ENCODE measurements at regions of chr22 and their contacts with region 1.

Region 1: GRCh38 chr22:19909350-19910179 is 32.0 kb upstream of the COMT start:
- DNase-seq: peak; percentile 35 to 90 (median 77)
- ATAC-seq: peak; percentile 86 to 95 (median 87)
- H3K4me3 ChIP-seq: no peak overlapping the region
- H3K4me3 Mint-ChIP-seq: peak overlapping the region in 1 of 3 donors; percentile 2
- H3K27ac ChIP-seq: no peak overlapping the region
- H3K27ac Mint-ChIP-seq: peak overlapping the region; percentile 62 to 80
- H3K4me1 ChIP-seq: peaks cover 2 to 8% of the 10 kb centered on the region in 2 experiments
- H3K4me1 Mint-ChIP-seq: peaks cover 4 to 17% (median 6%) of the 10 kb centered on the region in 3 donors
- H3K27me3 ChIP-seq: no peaks in the 10 kb centered on the region
- H3K27me3 Mint-ChIP-seq: no peaks in the 10 kb centered on the region

Region 2: GRCh38 chr22:19473578-19473977 is 436.0 kb before region 1 on chr22:
- CTCF ChIA-PET with region 1: no interaction called
- POLR2A ChIA-PET with region 1: no interaction called
- DNase-seq: no peak
- ATAC-seq: no peak
- H3K4me3 ChIP-seq: no peak overlapping the region
- H3K4me3 Mint-ChIP-seq: no peak overlapping the region
- H3K27ac ChIP-seq: no peak overlapping the region
- H3K27ac Mint-ChIP-seq: no peak overlapping the region
- H3K4me1 ChIP-seq: peaks cover 7 to 11% of the 10 kb centered on the region in 2 experiments
- H3K4me1 Mint-ChIP-seq: peaks cover 30 to 44% (median 33%) of the 10 kb centered on the region in 3 donors
- H3K27me3 ChIP-seq: no peaks in the 10 kb centered on the region
- H3K27me3 Mint-ChIP-seq: no peaks in the 10 kb centered on the region

Region 3: DNA sequence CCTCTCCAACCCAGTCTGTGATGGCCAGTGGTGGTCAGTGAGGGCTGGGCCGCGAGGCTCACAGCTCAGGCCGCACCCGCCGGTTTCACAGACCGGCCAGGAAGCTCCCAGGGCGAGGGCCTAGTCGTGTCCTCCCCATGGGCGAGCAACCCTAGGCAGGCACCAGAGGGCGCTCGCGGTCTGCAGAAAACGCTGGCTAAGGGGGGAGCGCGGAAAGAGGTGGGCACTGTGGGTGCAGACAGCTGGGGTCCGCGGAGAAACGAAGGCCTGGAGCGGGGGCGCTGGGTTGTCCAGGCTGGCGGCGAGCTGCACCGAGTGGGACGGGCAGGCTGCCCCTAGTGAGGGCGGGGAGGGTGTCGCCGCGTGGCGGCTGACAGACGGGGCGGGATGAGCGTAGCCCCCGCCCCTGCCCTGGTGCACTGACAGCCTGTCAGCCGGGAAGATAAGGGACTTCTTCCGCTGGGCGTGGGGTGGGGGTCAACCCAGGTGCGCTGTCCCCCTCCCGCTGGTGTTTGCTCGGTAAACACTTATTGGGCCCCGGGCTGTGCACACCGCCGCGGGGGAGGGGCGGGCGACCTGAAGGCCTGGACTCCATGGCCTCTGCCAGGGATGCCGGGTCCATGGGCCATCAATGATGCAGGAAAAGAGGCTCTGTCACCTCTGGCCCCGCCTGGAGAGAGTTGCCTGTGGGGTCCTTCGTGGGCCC is 178.8 kb before region 1 on chr22:
- CTCF ChIA-PET with region 1: interaction called, 3 to 20 read pairs
- POLR2A ChIA-PET with region 1: no interaction called
- DNase-seq: peak; percentile 52 to 89 (median 81)
- ATAC-seq: peak; percentile 87 to 92 (median 91)
- H3K4me3 ChIP-seq: peak overlapping the region; percentile 35 to 41
- H3K4me3 Mint-ChIP-seq: peak overlapping the region; percentile 69 to 80 (median 69)
- H3K27ac ChIP-seq: no peak overlapping the region
- H3K27ac Mint-ChIP-seq: no peak overlapping the region
- H3K4me1 ChIP-seq: peaks cover 0 to 13% of the 10 kb centered on the region in 2 experiments
- H3K4me1 Mint-ChIP-seq: peaks cover 2 to 6% (median 3%) of the 10 kb centered on the region in 3 donors
- H3K27me3 ChIP-seq: peaks cover 0 to 35% of the 10 kb centered on the region in 2 experiments
- H3K27me3 Mint-ChIP-seq: peaks cover 0 to 6% of the 10 kb centered on the region in 2 donors

Region 4: GRCh38 chr22:19756288-19757128 is 153.1 kb before region 1 on chr22:
- CTCF ChIA-PET with region 1: interaction called in 1 of 2 experiments, 11 read pairs
- POLR2A ChIA-PET with region 1: no interaction called
- DNase-seq: peak; percentile 30 to 80 (median 59)
- ATAC-seq: peak; percentile 80 to 87 (median 83)
- H3K4me3 ChIP-seq: peak overlapping the region; percentile 33 to 49
- H3K4me3 Mint-ChIP-seq: peak overlapping the region; percentile 49 to 80 (median 66)
- H3K27ac ChIP-seq: no peak overlapping the region
- H3K27ac Mint-ChIP-seq: no peak overlapping the region
- H3K4me1 ChIP-seq: peaks cover 5 to 38% of the 10 kb centered on the region in 2 experiments
- H3K4me1 Mint-ChIP-seq: peaks cover 28 to 35% (median 33%) of the 10 kb centered on the region in 3 donors
- H3K27me3 ChIP-seq: peaks cover 13 to 81% of the 10 kb centered on the region in 2 experiments
- H3K27me3 Mint-ChIP-seq: peaks cover 40 to 57% of the 10 kb centered on the region in 2 donors

Region 5: GRCh38 chr22:20102203-20102780 is 192.7 kb after region 1 on chr22:
- CTCF ChIA-PET with region 1: no interaction called
- POLR2A ChIA-PET with region 1: no interaction called
- DNase-seq: no peak
- ATAC-seq: no peak
- H3K4me3 ChIP-seq: no peak overlapping the region
- H3K4me3 Mint-ChIP-seq: peak overlapping the region in 1 of 3 donors; percentile 76
- H3K27ac ChIP-seq: no peak overlapping the region
- H3K27ac Mint-ChIP-seq: peak overlapping the region; percentile 79 to 97
- H3K4me1 ChIP-seq: peaks cover 26 to 37% of the 10 kb centered on the region in 2 experiments
- H3K4me1 Mint-ChIP-seq: peaks cover 35 to 49% (median 41%) of the 10 kb centered on the region in 3 donors
- H3K27me3 ChIP-seq: no peaks in the 10 kb centered on the region
- H3K27me3 Mint-ChIP-seq: no peaks in the 10 kb centered on the region

Measured in T-cell (primary cell).